ENCODE measurements at regions of chr6 and their contacts with region 1.

Region 1: DNA sequence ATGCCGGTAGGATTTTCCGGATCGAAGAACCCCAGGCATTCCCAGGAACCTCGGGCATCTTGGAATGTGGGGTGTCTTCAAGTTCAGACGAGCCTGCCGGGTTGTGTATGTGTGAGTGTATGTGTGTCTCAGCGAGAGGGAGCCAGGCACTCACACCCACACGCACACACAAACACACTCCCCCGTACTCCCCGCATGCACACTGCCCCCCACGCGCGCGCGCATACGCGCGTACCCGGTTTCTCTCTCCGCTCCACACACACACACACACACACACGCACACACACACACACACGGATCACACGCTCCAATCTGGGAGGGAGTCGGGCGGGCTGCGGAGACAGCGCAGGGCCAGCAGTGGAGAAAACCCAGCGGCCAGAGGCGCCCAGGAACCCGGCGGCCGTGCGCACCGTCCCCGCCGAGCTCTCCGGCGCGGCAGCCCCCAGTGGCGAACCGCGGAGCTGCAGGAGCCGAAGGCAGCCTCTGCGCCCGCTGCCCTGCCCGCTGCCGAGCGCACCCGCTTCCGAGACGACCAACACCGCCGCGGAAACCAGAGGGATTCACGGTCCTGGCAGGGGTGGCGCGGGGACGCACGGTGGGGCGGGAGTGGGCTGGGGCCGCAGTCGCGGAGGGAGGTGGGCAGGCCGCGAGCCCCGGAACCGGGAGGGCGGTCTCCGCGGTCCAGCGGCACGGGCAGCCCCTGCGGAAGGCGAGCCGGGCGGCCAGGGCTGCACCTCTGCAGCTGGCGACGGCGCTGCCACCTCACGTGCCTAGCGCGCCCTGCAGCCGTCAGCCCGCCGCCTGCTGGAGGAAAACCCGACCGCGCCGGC is at the start of gene LRFN2:
- DNase-seq: peak in 9 of 10 donors; percentile 44 to 80 (median 72)
- H3K4me3 ChIP-seq: peak within 1 kb of the TSS; percentile 42 to 80 (median 64)
- H3K27ac ChIP-seq: peak within 1 kb of the TSS in 58 of 59 donors; percentile 51 to 90 (median 78)
- H3K27me3 ChIP-seq: peaks cover 0 to 4% (median 0%) of the 10 kb centered on the region in 45 donors
- CTCF ChIP-seq: peak in 53 of 56 donors; percentile 29 to 74 (median 56)
- total RNA-seq, gene LRFN2: 7.1 to 43.1 (median 29.0) TPM

Region 2: GRCh38 chr6:40276141-40276540 is 311.3 kb before region 1 on chr6:
- intact Hi-C with region 1: no loop called
- DNase-seq: no peak
- H3K4me3 ChIP-seq: no peak overlapping the region
- H3K27ac ChIP-seq: no peak overlapping the region
- H3K27me3 ChIP-seq: no peaks in the 10 kb centered on the region
- CTCF ChIP-seq: no peak

Region 3: GRCh38 chr6:40328405-40328987 is 259.0 kb before region 1 on chr6:
- intact Hi-C with region 1: loop called (anchors 10 kb)
- DNase-seq: peak in 2 of 10 donors; percentile 32 to 64
- H3K4me3 ChIP-seq: no peak overlapping the region
- H3K27ac ChIP-seq: peak overlapping the region in 1 of 59 donors; percentile 31
- H3K27me3 ChIP-seq: peaks cover 0 to 7% (median 0%) of the 10 kb centered on the region in 45 donors
- CTCF ChIP-seq: peak in 51 of 56 donors; percentile 15 to 60 (median 42)

Region 4: GRCh38 chr6:40336940-40337760 is 250.3 kb before region 1 on chr6:
- intact Hi-C with region 1: loop called in 1 of 2 experiments (anchors 10 kb)
- DNase-seq: peak in 1 of 10 donors; percentile 73
- H3K4me3 ChIP-seq: no peak overlapping the region
- H3K27ac ChIP-seq: peak overlapping the region in 1 of 59 donors; percentile 63
- H3K27me3 ChIP-seq: peaks cover 0 to 14% (median 0%) of the 10 kb centered on the region in 45 donors
- CTCF ChIP-seq: no peak

Region 5: GRCh38 chr6:40371621-40372020 is 215.8 kb before region 1 on chr6:
- intact Hi-C with region 1: no loop called
- DNase-seq: no peak
- H3K4me3 ChIP-seq: no peak overlapping the region
- H3K27ac ChIP-seq: no peak overlapping the region
- H3K27me3 ChIP-seq: no peaks in the 10 kb centered on the region
- CTCF ChIP-seq: no peak

Region 6: GRCh38 chr6:40419372-40419771 is 168.1 kb before region 1 on chr6:
- intact Hi-C with region 1: loop called in 1 of 2 experiments (anchors 10 kb)
- DNase-seq: no peak
- H3K4me3 ChIP-seq: no peak overlapping the region
- H3K27ac ChIP-seq: peak overlapping the region in 11 of 59 donors; percentile 7 to 53 (median 20)
- H3K27me3 ChIP-seq: no peaks in the 10 kb centered on the region
- CTCF ChIP-seq: no peak

Region 7: DNA sequence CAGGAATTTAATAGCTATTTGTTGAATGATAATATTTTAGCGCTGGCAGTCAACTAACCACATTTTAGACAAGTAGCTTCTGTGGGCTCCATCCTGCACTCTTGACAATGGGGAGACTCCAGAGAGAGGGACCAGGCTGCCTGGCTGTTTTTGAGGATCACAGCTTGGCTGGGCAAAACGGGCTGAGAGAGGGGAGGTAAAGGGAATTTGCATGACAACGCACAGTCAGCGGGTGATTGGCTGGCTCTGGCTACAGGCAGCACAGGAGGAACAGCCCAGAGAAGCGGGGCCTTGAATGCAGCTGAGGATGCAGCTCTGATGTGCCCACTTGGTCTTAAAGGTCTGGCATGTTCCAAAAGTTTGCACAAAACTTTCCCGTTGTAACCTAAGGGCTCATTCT is 41.5 kb before region 1 on chr6:
- intact Hi-C with region 1: no loop called
- DNase-seq: no peak
- H3K4me3 ChIP-seq: no peak overlapping the region
- H3K27ac ChIP-seq: peak overlapping the region in 2 of 59 donors; percentile 3 to 22
- H3K27me3 ChIP-seq: no peaks in the 10 kb centered on the region
- CTCF ChIP-seq: no peak